Posterior vena cava (tissue), 2 donors: ENCODE measurements at regions of chr1 and their contacts with region 1.

Region 1: GRCh38 chr1:37834727-37835126 is 24.7 kb downstream of the MTF1 start:
- DNase-seq: no peak

Region 2: DNA sequence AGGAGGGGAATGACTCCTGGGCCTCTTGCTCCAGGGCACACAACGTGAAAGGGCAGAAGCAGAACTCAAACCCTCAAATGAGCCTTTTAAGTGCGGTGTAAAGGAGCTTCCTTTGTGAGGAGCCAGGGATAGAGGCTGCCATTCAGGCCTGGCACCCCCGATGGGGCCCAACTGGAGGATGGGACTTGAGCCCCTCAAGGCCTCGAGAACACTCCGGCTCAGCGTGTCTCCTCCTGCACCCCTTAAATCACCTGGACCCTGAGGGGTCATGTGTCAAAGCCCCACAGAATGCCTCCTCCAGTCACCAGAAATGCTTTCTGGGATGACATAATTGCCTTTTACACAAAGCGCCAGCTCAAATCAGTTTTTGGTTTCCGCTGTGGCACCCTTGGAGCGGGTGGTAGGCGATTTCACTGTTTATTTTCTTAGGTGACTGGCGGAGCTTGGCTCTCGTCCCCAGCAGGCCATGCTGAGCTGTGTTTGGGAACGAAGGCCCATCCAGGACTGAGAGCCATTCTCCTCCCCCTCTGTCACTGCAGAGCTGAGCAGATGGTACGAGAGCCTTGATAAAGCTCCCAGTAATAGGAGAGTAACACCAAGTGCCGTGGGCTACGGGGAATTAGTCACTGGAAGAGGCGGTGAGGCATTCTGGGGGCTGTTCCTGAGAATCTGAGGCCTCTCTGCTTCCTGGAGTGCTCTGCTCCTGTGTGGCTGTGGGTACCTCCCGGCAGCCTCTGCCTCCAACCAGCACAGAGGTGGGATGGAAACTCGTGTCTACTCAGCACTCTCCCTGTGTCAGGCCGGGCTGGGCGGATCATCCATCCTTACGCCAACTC is 963.4 kb before region 1 on chr1:
- intact Hi-C with region 1: no loop called
- DNase-seq: peak; percentile 66

Region 3: DNA sequence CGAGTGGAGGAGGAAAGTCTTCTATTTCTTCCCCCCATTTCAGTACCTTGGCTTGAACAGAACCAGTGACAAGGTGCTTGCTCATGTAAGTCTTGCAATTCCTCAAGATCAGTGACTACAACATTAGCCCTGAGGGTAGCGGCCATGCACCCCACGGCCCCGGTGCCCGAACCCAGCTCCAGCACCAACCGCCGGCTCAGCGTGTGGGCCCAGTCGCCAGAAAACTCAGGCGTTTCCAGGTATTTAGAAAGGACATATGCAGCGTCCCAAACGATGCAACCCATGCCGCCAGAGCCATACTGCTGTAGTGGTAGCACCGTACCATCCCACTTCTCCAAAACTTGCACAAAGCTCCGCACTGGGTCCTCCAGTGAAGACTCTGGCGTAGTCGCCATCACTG is 52.2 kb before region 1 on chr1:
- intact Hi-C with region 1: no loop called
- DNase-seq: no peak

Region 4: GRCh38 chr1:37853157-37853556 is 18.4 kb after region 1 on chr1:
- intact Hi-C with region 1: loop called in 1 of 2 experiments (anchors 1 kb)
- DNase-seq: no peak

Region 5: DNA sequence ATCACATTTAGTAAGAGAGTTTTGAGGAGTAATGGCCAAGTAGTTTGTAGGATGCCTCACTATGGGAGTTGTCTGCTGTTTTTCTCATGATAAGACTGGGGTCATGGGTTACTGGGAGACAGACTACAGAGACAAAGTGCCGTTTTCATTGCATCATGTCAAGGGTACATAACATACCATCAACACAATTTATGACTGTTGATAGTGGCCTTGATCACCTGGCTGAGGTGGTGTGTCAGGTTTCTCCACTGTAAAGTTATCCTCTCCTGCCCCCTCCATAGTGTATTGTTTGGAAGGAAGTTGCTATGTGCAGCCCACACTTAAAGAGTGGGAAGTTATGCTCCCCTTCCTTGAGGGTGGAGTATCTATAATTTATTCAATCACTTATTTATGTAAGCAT is 475.4 kb after region 1 on chr1:
- intact Hi-C with region 1: no loop called
- DNase-seq: no peak